Common myeloid progenitor, CD34-positive (primary cell): ENCODE measurements at regions of chr5 and their contacts with region 1.

Region 1: GRCh38 chr5:138352071-138352721 is at the start of gene KDM3B:
- DNase-seq: peak; percentile 89 to 95 (median 94)
- H3K4me3 ChIP-seq: peak within 1 kb of the TSS; percentile 86 to 98 (median 96)
- H3K27ac ChIP-seq: peak within 1 kb of the TSS; percentile 91 to 98
- H3K4me1 ChIP-seq: peaks cover 25 to 45% (median 35%) of the 10 kb centered on the region in 4 experiments
- H3K27me3 ChIP-seq: no peaks in the 10 kb centered on the region

Region 2: DNA sequence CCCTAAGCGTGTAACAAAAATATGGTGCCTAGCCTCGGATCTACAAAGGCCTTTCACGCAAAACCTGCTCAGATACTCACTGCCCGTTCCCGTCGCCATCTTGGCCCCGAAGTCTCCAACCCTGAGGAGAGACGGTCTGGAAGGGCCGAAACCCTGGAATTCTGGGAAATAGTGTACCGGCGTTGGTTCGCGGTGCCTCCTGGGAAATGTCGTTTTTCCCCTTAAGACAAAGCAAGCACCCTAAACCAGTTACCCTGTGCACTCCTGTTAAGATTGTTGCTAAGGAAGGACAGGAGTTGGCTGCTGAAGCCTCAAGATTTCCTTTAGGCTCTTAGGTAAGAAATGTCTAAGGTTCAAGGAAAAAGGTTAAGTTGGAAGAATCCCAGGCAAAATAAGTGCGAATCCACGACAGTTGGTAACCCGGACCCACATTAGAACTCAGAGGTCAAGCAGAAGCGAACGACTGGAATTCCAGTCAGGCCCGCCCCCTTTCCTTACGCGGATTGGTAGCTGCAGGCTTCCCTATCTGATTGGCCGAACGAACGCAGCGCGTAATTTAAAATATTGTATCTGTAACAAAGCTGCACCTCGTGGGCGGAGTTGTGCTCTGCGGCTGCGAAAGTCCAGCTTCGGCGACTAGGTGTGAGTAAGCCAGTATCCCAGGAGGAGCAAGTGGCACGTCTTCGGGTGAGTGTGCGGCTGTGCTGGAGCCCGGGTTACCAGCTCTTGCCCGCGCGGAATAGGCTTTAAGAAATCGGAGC is 173.5 kb before region 1 on chr5 and contains the starts of genes BRD8 and KIF20A:
- CTCF ChIA-PET with region 1: interaction called, 12 read pairs
- POLR2A ChIA-PET with region 1: interaction called, 5 read pairs
- DNase-seq: peak; percentile 94 to 96 (median 95)
- H3K4me3 ChIP-seq: peak within 1 kb of the TSS; percentile 69 to 100 (median 98)
- H3K27ac ChIP-seq: peak within 1 kb of the TSS; percentile 88 to 91
- H3K4me1 ChIP-seq: peaks cover 13 to 25% (median 21%) of the 10 kb centered on the region in 4 experiments
- H3K27me3 ChIP-seq: no peaks in the 10 kb centered on the region

Region 3: GRCh38 chr5:138331449-138332368 is 20.5 kb before region 1 on chr5 and contains the start of gene CDC25C:
- CTCF ChIA-PET with region 1: interaction called, 233 read pairs
- POLR2A ChIA-PET with region 1: interaction called, 42 read pairs
- DNase-seq: peak; percentile 99
- H3K4me3 ChIP-seq: peak within 1 kb of the TSS; percentile 41 to 99 (median 85)
- H3K27ac ChIP-seq: peak within 1 kb of the TSS in 1 of 2 experiments; percentile 65
- H3K4me1 ChIP-seq: peaks cover 7 to 23% (median 15%) of the 10 kb centered on the region in 4 experiments
- H3K27me3 ChIP-seq: no peaks in the 10 kb centered on the region

Region 4: DNA sequence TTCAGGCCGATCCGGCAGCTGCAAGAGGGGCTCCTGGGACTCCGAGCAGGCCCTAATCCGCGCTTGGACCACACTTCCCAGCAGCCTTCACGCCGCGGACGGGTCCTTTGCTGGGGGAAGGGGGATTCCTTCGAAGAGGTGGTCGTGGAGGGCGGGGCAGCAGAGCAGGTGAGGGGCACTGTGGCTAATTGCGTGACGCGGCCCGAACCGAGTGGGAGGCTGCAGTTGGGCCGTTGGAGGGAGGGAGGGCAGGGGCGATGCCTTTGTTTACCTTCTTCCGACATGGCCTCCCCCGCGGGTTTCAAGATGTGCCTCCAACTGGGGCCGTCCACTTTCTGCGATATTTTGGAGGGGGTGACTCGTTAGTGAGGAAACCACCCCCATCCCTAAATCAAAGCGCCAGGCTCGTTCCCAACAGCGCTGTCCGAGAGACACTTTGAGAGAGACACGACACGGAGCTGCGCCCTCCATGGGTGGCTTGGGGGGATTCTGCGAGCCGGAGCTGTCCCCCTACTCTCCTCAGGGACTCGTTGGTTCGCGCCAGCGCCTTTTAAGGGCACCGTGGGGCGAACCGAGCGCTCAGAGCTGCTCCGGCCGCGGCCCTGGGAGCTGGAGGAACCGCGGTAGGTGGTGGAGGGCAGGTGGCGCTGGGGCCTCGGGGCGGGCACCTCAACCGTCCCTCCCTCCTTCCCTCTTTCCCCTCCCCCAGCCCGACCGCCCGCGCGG is 14.3 kb before region 1 on chr5 and contains the start of gene FAM53C:
- CTCF ChIA-PET with region 1: interaction called, 233 read pairs
- POLR2A ChIA-PET with region 1: interaction called, 44 read pairs
- DNase-seq: peak; percentile 93 to 96 (median 96)
- H3K4me3 ChIP-seq: peak within 1 kb of the TSS; percentile 81 to 95 (median 89)
- H3K27ac ChIP-seq: peak within 1 kb of the TSS; percentile 100
- H3K4me1 ChIP-seq: peaks cover 13 to 35% (median 27%) of the 10 kb centered on the region in 4 experiments
- H3K27me3 ChIP-seq: no peaks in the 10 kb centered on the region

Region 5: DNA sequence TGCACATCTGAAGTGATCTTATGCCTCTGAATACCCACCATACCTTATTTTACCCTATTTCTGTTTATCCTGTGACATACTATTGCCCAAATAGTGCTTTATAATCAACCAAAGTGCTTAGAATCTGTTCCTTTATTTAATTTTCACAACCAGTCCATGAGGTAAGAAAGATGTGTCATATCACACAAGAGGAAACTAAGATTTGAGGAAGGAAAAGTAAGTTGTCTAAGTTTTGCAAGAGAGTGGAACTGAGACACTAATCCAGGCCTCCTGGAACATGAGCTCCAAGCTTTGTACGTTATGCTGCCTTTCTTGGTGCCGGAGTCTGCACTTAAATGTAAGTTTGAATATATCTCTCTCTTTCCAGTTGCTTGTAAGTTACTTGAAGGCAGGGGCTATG is 17.5 kb after region 1 on chr5:
- CTCF ChIA-PET with region 1: interaction called, 125 read pairs
- POLR2A ChIA-PET with region 1: interaction called, 11 read pairs
- DNase-seq: peak; percentile 22 to 72 (median 68)
- H3K4me3 ChIP-seq: peak overlapping the region in 3 of 7 experiments; percentile 5 to 48 (median 41)
- H3K27ac ChIP-seq: peak overlapping the region in 1 of 2 experiments; percentile 68
- H3K4me1 ChIP-seq: peaks cover 13 to 38% (median 24%) of the 10 kb centered on the region in 4 experiments
- H3K27me3 ChIP-seq: no peaks in the 10 kb centered on the region

Region 6: GRCh38 chr5:138528208-138528607 is 176.0 kb after region 1 on chr5:
- CTCF ChIA-PET with region 1: no interaction called
- POLR2A ChIA-PET with region 1: no interaction called
- DNase-seq: no peak
- H3K4me3 ChIP-seq: no peak overlapping the region
- H3K27ac ChIP-seq: no peak overlapping the region
- H3K4me1 ChIP-seq: peaks cover 0 to 2% (median 0%) of the 10 kb centered on the region in 4 experiments
- H3K27me3 ChIP-seq: no peaks in the 10 kb centered on the region

Region 7: GRCh38 chr5:138784590-138784989 is 432.4 kb after region 1 on chr5:
- CTCF ChIA-PET with region 1: no interaction called
- POLR2A ChIA-PET with region 1: no interaction called
- DNase-seq: no peak
- H3K4me3 ChIP-seq: no peak overlapping the region
- H3K27ac ChIP-seq: no peak overlapping the region
- H3K4me1 ChIP-seq: no peaks in the 10 kb centered on the region
- H3K27me3 ChIP-seq: no peaks in the 10 kb centered on the region

Region 8: GRCh38 chr5:138900281-138900965 is 548.2 kb after region 1 on chr5:
- CTCF ChIA-PET with region 1: no interaction called
- POLR2A ChIA-PET with region 1: no interaction called
- DNase-seq: peak; percentile 35 to 78 (median 63)
- H3K4me3 ChIP-seq: no peak overlapping the region
- H3K27ac ChIP-seq: no peak overlapping the region
- H3K4me1 ChIP-seq: peaks cover 0 to 10% (median 8%) of the 10 kb centered on the region in 4 experiments
- H3K27me3 ChIP-seq: no peaks in the 10 kb centered on the region